B cell (primary cell): ENCODE measurements at regions of chr1 and their contacts with region 1.

Region 1: DNA sequence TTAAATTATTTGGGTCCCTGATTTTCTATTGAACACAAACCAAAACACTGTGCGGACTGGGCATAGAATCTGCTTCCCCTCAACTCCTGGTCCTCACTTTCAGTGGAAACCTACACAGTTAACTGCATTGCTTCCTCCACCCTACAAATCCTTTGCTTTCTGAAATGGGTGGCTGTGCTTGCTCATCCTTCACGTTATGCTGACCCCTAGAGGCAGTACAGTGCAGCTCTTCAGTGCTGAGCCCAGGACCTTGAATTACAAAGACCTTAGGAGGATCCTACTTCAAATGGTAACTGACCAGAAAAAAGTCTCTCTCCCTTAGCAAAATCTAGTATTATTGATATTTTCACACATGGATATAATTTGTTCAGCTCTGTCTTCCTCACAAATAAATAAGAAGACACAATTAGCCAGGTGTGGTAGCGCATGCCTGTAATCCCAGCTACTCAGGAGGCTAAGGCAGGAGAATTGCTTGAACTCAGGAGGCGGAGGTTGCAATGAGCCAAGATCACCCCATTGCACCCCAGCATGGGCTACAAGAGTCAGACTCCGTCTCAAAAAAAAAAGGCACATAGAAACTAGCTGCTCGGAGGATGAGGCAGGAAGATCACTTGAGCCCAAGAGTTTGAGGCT is 63.4 kb upstream of the L1TD1 start:
- DNase-seq: peak; percentile 15
- ATAC-seq: peak; percentile 51
- H3K4me3 ChIP-seq: no peak overlapping the region
- H3K4me3 Mint-ChIP-seq: no peak overlapping the region
- H3K27ac ChIP-seq: no peak overlapping the region
- H3K27ac Mint-ChIP-seq: no peak overlapping the region
- H3K4me1 ChIP-seq: no peaks in the 10 kb centered on the region
- H3K4me1 Mint-ChIP-seq: no peaks in the 10 kb centered on the region
- H3K27me3 ChIP-seq: no peaks in the 10 kb centered on the region
- H3K27me3 Mint-ChIP-seq: no peaks in the 10 kb centered on the region
- CTCF ChIP-seq: peak; percentile 63

Region 2: GRCh38 chr1:62144238-62144831 is 13.1 kb after region 1 on chr1:
- CTCF ChIA-PET with region 1: interaction called, 52 read pairs
- POLR2A ChIA-PET with region 1: no interaction called
- intact Hi-C with region 1: no loop called
- DNase-seq: peak; percentile 37
- ATAC-seq: no peak
- H3K4me3 ChIP-seq: no peak overlapping the region
- H3K4me3 Mint-ChIP-seq: no peak overlapping the region
- H3K27ac ChIP-seq: no peak overlapping the region
- H3K27ac Mint-ChIP-seq: no peak overlapping the region
- H3K4me1 ChIP-seq: no peaks in the 10 kb centered on the region
- H3K4me1 Mint-ChIP-seq: peaks cover 3% of the 10 kb centered on the region
- H3K27me3 ChIP-seq: no peaks in the 10 kb centered on the region
- H3K27me3 Mint-ChIP-seq: no peaks in the 10 kb centered on the region
- CTCF ChIP-seq: peak; percentile 71